ENCODE measurements at regions of chr1 and their contacts with region 1.

Region 1: DNA sequence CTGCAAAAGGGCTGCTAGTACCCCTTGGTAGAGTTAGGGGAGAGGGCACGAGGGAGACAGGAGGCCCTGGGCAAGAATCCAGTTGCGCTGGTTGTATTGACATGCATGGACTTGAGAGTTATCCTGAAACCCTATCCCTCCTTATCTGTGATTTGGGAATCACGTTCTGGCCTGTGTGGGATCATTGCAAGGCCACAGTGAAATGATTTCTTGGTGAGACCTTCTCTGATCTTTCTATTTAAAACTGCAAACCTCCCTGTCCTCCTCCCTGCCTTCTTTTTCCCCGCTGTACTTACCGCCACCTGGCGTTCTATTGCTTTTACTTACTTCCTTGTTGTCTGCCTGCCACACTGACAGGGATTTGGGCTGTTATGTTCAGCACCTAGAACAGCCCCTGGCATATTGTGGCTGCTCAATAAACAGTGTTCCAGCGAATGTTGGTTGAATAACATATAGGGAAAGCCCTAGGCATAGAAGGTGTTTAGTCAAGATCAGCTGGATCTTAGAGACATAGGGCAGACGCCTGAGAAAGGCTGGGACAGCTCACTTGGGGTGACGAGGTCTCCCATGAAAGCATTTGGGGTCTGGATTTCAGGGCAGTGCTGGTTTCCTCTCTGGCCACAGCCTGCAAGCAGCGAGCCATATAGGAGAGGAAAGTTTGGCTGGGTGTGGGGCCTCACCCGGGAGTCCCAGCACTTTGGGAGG is 25.6 kb downstream of the ALPL start:
- DNase-seq: peak; percentile 77
- ATAC-seq: peak; percentile 78
- H3K4me3 ChIP-seq: no peak overlapping the region
- H3K4me3 Mint-ChIP-seq: no peak overlapping the region
- H3K27ac ChIP-seq: no peak overlapping the region
- H3K27ac Mint-ChIP-seq: no peak overlapping the region
- H3K4me1 ChIP-seq: peaks cover 0 to 10% of the 10 kb centered on the region in 2 donors
- H3K4me1 Mint-ChIP-seq: peaks cover 5% of the 10 kb centered on the region
- H3K27me3 ChIP-seq: peaks cover 0 to 9% (median 4%) of the 10 kb centered on the region in 4 experiments
- H3K27me3 Mint-ChIP-seq: peaks cover 23% of the 10 kb centered on the region
- CTCF ChIP-seq: peak; percentile 65

Region 2: DNA sequence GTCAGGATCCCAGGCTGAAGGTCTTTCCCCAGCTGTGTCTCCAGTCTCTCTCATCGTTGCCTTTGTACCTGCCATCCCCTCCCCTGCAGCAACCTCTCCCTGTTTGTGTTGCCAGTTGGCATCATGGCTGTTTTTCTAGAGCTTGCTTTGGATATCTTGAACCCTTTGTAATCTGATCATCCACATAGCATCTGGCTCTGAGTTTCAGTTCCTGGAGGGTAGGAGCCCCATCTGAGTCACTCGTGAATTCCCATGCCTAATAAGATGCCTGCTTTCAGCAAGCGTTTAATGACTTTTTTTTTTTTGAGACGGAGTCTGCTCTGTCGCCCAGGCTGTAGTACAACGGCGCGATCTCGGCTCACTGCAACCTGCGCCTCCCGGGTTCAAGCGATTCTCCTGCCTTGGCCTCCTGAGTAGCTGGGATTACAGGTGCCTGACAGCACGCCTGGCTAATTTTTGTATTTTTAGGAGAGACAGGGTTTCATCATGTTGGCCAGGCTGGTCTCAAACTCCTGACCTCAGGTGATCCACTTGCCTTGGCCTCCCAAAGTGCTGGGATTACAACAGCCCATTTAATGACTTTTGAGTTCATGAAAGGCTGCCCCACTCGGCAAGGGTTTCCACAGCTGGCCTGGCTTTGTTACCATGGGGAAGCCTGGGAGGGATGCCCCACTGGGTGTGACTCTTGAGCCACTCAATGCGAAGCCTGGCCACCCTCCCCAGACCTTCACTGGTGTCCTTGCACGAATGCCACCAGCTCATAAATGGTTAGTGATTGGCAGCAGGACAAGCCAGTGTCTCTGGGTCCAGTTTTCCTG is 13.7 kb before region 1 on chr1:
- CTCF ChIA-PET with region 1: interaction called, 37 read pairs
- POLR2A ChIA-PET with region 1: no interaction called
- intact Hi-C with region 1: loop called (anchors 2 kb)
- DNase-seq: no peak
- ATAC-seq: no peak
- H3K4me3 ChIP-seq: no peak overlapping the region
- H3K4me3 Mint-ChIP-seq: peak overlapping the region; percentile 37
- H3K27ac ChIP-seq: no peak overlapping the region
- H3K27ac Mint-ChIP-seq: peak overlapping the region; percentile 61
- H3K4me1 ChIP-seq: peaks cover 69 to 94% of the 10 kb centered on the region in 2 donors
- H3K4me1 Mint-ChIP-seq: peaks cover 78% of the 10 kb centered on the region
- H3K27me3 ChIP-seq: no peaks in the 10 kb centered on the region
- H3K27me3 Mint-ChIP-seq: no peaks in the 10 kb centered on the region
- CTCF ChIP-seq: no peak